IMR-90 (cell line): ENCODE measurements at regions of chrX and their contacts with region 1.

Region 1: GRCh38 chrX:4277122-4277521 is 563.7 kb upstream of the PRKX start:
- DNase-seq: no peak
- ATAC-seq: no peak
- H3K4me3 ChIP-seq: no peak overlapping the region
- H3K27ac ChIP-seq: no peak overlapping the region
- H3K4me1 ChIP-seq: no peaks in the 10 kb centered on the region
- H3K27me3 ChIP-seq: no peaks in the 10 kb centered on the region
- CTCF ChIP-seq: no peak
- POLR2A ChIP-seq: no peak
- RAD21 ChIP-seq: no peak

Region 2: GRCh38 chrX:4150259-4150658 is 126.9 kb before region 1 on chrX:
- CTCF ChIA-PET with region 1: no interaction called
- POLR2A ChIA-PET with region 1: no interaction called
- dilution Hi-C with region 1: no loop called
- in situ Hi-C with region 1: no loop called
- intact Hi-C with region 1: no loop called
- DNase-seq: no peak
- ATAC-seq: no peak
- H3K4me3 ChIP-seq: no peak overlapping the region
- H3K27ac ChIP-seq: no peak overlapping the region
- H3K4me1 ChIP-seq: no peaks in the 10 kb centered on the region
- H3K27me3 ChIP-seq: no peaks in the 10 kb centered on the region
- CTCF ChIP-seq: no peak
- POLR2A ChIP-seq: no peak
- RAD21 ChIP-seq: no peak

Region 3: GRCh38 chrX:4193500-4194190 is 83.5 kb before region 1 on chrX:
- CTCF ChIA-PET with region 1: no interaction called
- POLR2A ChIA-PET with region 1: no interaction called
- dilution Hi-C with region 1: no loop called
- in situ Hi-C with region 1: no loop called
- intact Hi-C with region 1: loop called (anchors 2 kb)
- DNase-seq: no peak
- ATAC-seq: no peak
- H3K4me3 ChIP-seq: no peak overlapping the region
- H3K27ac ChIP-seq: no peak overlapping the region
- H3K4me1 ChIP-seq: no peaks in the 10 kb centered on the region
- H3K27me3 ChIP-seq: no peaks in the 10 kb centered on the region
- CTCF ChIP-seq: no peak
- POLR2A ChIP-seq: no peak
- RAD21 ChIP-seq: no peak